CD8-positive, alpha-beta T cell (primary cell): ENCODE measurements at regions of chr9 and their contacts with region 1.

Region 1: GRCh38 chr9:114587385-114588202 is at the start of gene ATP6V1G1:
- DNase-seq: peak; percentile 96 to 100 (median 99)
- ATAC-seq: peak; percentile 92
- H3K4me3 ChIP-seq: peak within 1 kb of the TSS; percentile 79 to 93
- H3K4me3 Mint-ChIP-seq: peak within 1 kb of the TSS; percentile 99
- H3K27ac ChIP-seq: peak within 1 kb of the TSS; percentile 88 to 94
- H3K27ac Mint-ChIP-seq: peak within 1 kb of the TSS; percentile 100
- H3K4me1 ChIP-seq: peaks cover 36% of the 10 kb centered on the region
- H3K4me1 Mint-ChIP-seq: peaks cover 47% of the 10 kb centered on the region
- H3K27me3 ChIP-seq: no peaks in the 10 kb centered on the region
- H3K27me3 Mint-ChIP-seq: no peaks in the 10 kb centered on the region
- CTCF ChIP-seq: no peak
- total RNA-seq, gene ATP6V1G1: 141 to 147 TPM

Region 2: GRCh38 chr9:113906411-113907110 is 681.0 kb before region 1 on chr9:
- CTCF ChIA-PET with region 1: no interaction called
- POLR2A ChIA-PET with region 1: no interaction called
- intact Hi-C with region 1: no loop called
- DNase-seq: no peak
- ATAC-seq: no peak
- H3K4me3 ChIP-seq: no peak overlapping the region
- H3K4me3 Mint-ChIP-seq: no peak overlapping the region
- H3K27ac ChIP-seq: no peak overlapping the region
- H3K27ac Mint-ChIP-seq: no peak overlapping the region
- H3K4me1 ChIP-seq: no peaks in the 10 kb centered on the region
- H3K4me1 Mint-ChIP-seq: no peaks in the 10 kb centered on the region
- H3K27me3 ChIP-seq: no peaks in the 10 kb centered on the region
- H3K27me3 Mint-ChIP-seq: no peaks in the 10 kb centered on the region
- CTCF ChIP-seq: no peak

Region 3: GRCh38 chr9:114385412-114386181 is 202.0 kb before region 1 on chr9:
- CTCF ChIA-PET with region 1: interaction called, 3 read pairs
- POLR2A ChIA-PET with region 1: interaction called, 13 read pairs
- intact Hi-C with region 1: loop called in 1 of 2 experiments (anchors 5 kb)
- DNase-seq: peak; percentile 76 to 98 (median 89)
- ATAC-seq: peak; percentile 70
- H3K4me3 ChIP-seq: peak overlapping the region; percentile 89 to 95
- H3K4me3 Mint-ChIP-seq: peak overlapping the region; percentile 99
- H3K27ac ChIP-seq: peak overlapping the region; percentile 90 to 93
- H3K27ac Mint-ChIP-seq: peak overlapping the region; percentile 95
- H3K4me1 ChIP-seq: peaks cover 72% of the 10 kb centered on the region
- H3K4me1 Mint-ChIP-seq: peaks cover 75% of the 10 kb centered on the region
- H3K27me3 ChIP-seq: no peaks in the 10 kb centered on the region
- H3K27me3 Mint-ChIP-seq: no peaks in the 10 kb centered on the region
- CTCF ChIP-seq: no peak

Region 4: DNA sequence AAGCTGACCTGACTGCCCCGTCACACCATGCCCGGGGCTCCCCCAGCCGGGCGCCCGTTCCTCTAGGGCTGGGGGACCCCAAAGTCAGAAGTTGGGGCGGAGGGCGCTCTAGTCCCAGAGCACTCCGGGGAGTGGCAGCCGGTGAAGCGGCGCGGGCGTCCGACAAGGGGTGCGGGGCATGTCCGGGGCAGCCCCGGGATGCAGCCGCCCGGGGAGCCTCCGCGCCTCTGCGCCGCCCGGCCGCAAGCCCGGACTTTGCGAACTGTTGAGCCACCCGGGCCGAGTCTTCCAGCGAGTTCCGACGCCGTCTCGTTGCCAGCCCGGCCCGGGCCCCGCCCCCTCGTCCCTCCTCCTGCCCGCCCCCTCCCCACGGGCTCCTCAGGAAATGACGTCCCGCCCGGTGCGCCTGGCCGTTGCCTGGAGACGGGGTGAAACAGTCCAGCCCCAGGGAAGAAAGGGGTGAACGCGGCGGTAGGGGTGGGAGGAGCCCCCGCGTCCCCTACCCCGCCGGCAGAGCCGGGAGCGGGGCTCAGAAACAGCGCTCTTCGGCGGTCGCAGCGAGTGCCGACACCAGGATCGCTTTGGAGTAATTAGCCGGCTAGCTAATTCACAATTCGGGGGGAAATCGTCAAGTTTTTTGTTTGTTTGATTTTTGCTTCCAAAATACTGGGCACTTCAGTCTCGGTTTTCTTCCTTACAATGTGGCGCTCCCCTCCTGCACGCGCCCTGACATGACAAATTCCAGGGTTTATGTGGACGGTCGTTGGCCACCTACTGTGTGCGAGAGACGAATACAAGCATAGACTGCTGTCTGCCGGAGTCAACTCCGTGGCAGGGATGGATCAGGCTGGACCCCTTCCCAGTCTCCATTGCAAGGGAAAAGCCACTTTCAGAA is 82.2 kb before region 1 on chr9 and contains the start of gene WHRN:
- CTCF ChIA-PET with region 1: interaction called, 10 read pairs
- POLR2A ChIA-PET with region 1: interaction called, 3 read pairs
- intact Hi-C with region 1: loop called (anchors 1 kb)
- DNase-seq: peak; percentile 84 to 96 (median 91)
- ATAC-seq: peak; percentile 82
- H3K4me3 ChIP-seq: peak within 1 kb of the TSS; percentile 51 to 64
- H3K4me3 Mint-ChIP-seq: peak within 1 kb of the TSS; percentile 86
- H3K27ac ChIP-seq: peak within 1 kb of the TSS; percentile 33 to 45
- H3K27ac Mint-ChIP-seq: peak within 1 kb of the TSS; percentile 77
- H3K4me1 ChIP-seq: peaks cover 13% of the 10 kb centered on the region
- H3K4me1 Mint-ChIP-seq: peaks cover 34% of the 10 kb centered on the region
- H3K27me3 ChIP-seq: peaks cover 0 to 14% of the 10 kb centered on the region in 2 experiments
- H3K27me3 Mint-ChIP-seq: peaks cover 30% of the 10 kb centered on the region
- CTCF ChIP-seq: no peak
- total RNA-seq, gene WHRN: 41.9 to 45.5 TPM

Region 5: DNA sequence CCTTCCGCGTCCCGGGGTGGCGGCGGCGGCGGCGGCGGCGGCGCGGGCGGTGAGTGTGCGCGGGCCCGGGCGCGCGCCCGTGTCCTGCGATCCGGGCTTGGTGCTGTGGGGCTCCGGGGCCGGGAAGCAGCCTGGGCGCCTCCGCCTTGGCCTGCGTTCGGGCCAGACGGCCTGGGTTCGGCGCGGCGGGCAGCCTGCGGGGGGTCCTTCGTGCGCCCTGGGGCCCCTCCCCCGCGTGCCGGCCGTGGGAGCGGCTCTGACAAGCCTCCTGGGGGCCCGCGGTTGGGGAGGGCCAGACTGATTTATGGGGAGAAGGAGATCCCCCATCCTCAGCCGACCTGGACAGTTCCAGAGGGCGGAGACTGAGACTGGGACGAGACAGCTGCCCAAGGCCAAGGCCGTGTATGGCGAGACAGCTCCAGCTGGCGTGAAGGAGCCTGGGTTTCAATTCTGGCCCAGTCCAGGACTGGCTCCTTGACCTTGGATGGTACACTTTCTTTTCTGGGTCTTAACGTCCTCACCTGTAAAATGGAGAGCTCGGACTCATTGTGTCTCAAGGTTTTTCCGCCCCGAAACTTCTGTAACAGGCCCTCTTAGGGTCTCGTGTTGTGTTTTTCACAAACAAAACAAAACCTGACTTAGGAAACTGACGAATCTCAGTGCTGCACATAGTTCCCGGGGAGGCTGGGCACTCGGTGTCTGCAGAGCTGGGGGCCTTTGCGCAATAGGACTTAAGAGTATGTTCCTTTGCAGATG is 24.1 kb after region 1 on chr9:
- CTCF ChIA-PET with region 1: interaction called, 24 read pairs
- POLR2A ChIA-PET with region 1: interaction called, 28 read pairs
- intact Hi-C with region 1: loop called (anchors 1 kb)
- DNase-seq: peak in 8 of 9 experiments; percentile 21 to 81 (median 45)
- ATAC-seq: peak; percentile 67
- H3K4me3 ChIP-seq: peak overlapping the region; percentile 80 to 90
- H3K4me3 Mint-ChIP-seq: peak overlapping the region; percentile 91
- H3K27ac ChIP-seq: peak overlapping the region; percentile 77 to 80
- H3K27ac Mint-ChIP-seq: peak overlapping the region; percentile 95
- H3K4me1 ChIP-seq: peaks cover 36% of the 10 kb centered on the region
- H3K4me1 Mint-ChIP-seq: peaks cover 47% of the 10 kb centered on the region
- H3K27me3 ChIP-seq: no peaks in the 10 kb centered on the region
- H3K27me3 Mint-ChIP-seq: no peaks in the 10 kb centered on the region
- CTCF ChIP-seq: no peak

Region 6: GRCh38 chr9:114805670-114806525 is 218.3 kb after region 1 on chr9 and contains the start of gene TNFSF15:
- CTCF ChIA-PET with region 1: no interaction called
- POLR2A ChIA-PET with region 1: no interaction called
- intact Hi-C with region 1: no loop called
- DNase-seq: peak in 2 of 9 experiments; percentile 6 to 32
- ATAC-seq: no peak
- H3K4me3 ChIP-seq: no peak within 1 kb of the TSS
- H3K4me3 Mint-ChIP-seq: peak within 1 kb of the TSS; percentile 3
- H3K27ac ChIP-seq: no peak within 1 kb of the TSS
- H3K27ac Mint-ChIP-seq: no peak within 1 kb of the TSS
- H3K4me1 ChIP-seq: peaks cover 17% of the 10 kb centered on the region
- H3K4me1 Mint-ChIP-seq: peaks cover 22% of the 10 kb centered on the region
- H3K27me3 ChIP-seq: no peaks in the 10 kb centered on the region
- H3K27me3 Mint-ChIP-seq: no peaks in the 10 kb centered on the region
- CTCF ChIP-seq: no peak
- total RNA-seq, gene TNFSF15: not detected

Region 7: GRCh38 chr9:114930056-114930812 is 342.6 kb after region 1 on chr9 and contains the start of gene TNFSF8:
- CTCF ChIA-PET with region 1: no interaction called
- POLR2A ChIA-PET with region 1: interaction called, 3 read pairs
- intact Hi-C with region 1: loop called (anchors 5 to 10 kb)
- DNase-seq: peak; percentile 30 to 91 (median 76)
- ATAC-seq: peak; percentile 82
- H3K4me3 ChIP-seq: peak within 1 kb of the TSS; percentile 65 to 81
- H3K4me3 Mint-ChIP-seq: peak within 1 kb of the TSS; percentile 99
- H3K27ac ChIP-seq: peak within 1 kb of the TSS; percentile 74 to 82
- H3K27ac Mint-ChIP-seq: peak within 1 kb of the TSS; percentile 99
- H3K4me1 ChIP-seq: peaks cover 35% of the 10 kb centered on the region
- H3K4me1 Mint-ChIP-seq: peaks cover 56% of the 10 kb centered on the region
- H3K27me3 ChIP-seq: no peaks in the 10 kb centered on the region
- H3K27me3 Mint-ChIP-seq: no peaks in the 10 kb centered on the region
- CTCF ChIP-seq: no peak
- total RNA-seq, gene TNFSF8: 47.7 to 49.3 TPM